ENCODE measurements at regions of chr10 and their contacts with region 1.

Region 1: GRCh38 chr10:69914398-69915214 is 112.9 kb downstream of the COL13A1 start:
- DNase-seq: no peak
- H3K4me3 ChIP-seq: no peak overlapping the region
- H3K27me3 ChIP-seq: no peaks in the 10 kb centered on the region
- CTCF ChIP-seq: peak; percentile 94

Region 2: DNA sequence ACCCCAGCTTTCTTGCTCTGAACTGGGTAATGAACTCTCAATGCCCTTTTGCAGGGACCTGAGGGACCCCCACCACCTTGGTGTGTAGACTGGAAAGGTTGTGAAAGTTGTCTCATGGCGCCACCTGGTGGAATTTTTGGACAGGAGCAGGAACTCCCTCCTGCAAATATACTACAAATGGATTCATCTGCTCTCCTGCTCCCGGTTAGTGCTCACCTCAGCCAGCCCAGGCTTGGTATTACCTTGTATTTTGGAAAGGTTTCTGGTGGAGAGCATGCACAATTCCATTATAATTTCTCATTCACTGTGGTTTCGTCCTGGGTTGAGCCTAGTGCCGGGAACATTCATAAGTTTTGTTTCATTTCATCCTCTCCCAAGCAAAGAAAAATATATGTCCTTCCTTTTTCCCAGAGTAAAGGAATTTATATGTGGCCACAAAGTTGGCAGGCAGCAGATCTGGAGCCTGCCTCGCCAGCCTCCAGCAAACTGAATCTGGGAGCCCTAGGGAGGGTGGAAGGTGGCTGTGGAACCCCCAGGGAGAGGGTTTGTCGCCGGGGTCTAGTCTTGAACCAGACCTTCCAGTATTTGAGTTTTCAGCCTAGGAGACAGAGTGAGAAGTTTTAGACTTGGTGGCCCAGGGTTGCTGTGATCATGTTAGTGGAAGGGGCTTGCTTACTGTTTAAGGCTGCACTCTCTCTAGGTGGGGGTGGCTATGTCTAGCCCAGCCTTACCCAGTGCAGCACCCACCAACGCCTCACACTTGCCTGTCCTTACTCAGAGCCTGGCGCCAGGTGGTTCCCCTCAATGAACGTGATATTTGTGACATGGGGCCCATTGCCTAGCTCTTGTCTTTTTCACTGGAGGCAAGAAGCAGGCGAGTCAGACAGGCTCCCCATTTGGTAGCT is 275.1 kb before region 1 on chr10:
- CTCF ChIA-PET with region 1: interaction called, 26 read pairs
- POLR2A ChIA-PET with region 1: no interaction called
- DNase-seq: no peak
- H3K4me3 ChIP-seq: no peak overlapping the region
- H3K27me3 ChIP-seq: peaks cover 2% of the 10 kb centered on the region
- CTCF ChIP-seq: peak; percentile 83

Region 3: GRCh38 chr10:69742928-69743602 is 171.5 kb before region 1 on chr10:
- CTCF ChIA-PET with region 1: interaction called, 32 read pairs
- POLR2A ChIA-PET with region 1: no interaction called
- DNase-seq: no peak
- H3K4me3 ChIP-seq: no peak overlapping the region
- H3K27me3 ChIP-seq: peaks cover 7% of the 10 kb centered on the region; the same call in 1 of the 2 replicates
- CTCF ChIP-seq: peak; percentile 66

Region 4: DNA sequence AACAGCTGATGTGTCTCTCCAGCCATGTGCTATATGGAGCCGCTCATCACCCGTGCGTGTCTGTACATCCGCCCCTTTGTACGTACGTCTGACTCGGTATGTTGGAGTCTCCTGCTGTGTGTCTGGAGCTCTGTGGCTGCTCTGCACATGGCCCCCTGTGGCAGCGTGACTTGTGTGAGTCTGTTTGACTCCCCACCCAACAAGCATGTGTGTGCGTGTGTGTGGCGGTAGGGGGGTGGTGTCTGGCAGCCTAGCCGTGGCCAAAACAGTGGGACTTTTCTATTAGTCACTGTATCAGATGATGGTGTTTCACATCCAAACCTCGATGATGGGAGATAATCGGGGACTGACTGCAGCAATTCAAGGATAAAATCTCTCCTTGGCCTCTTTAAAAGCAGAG is 18.8 kb before region 1 on chr10:
- CTCF ChIA-PET with region 1: interaction called, 75 read pairs
- POLR2A ChIA-PET with region 1: no interaction called
- DNase-seq: peak; percentile 71
- H3K4me3 ChIP-seq: no peak overlapping the region
- H3K27me3 ChIP-seq: no peaks in the 10 kb centered on the region
- CTCF ChIP-seq: no peak

Region 5: GRCh38 chr10:69929575-69929974 is 15.0 kb after region 1 on chr10:
- CTCF ChIA-PET with region 1: interaction called, 21 read pairs
- POLR2A ChIA-PET with region 1: no interaction called
- DNase-seq: no peak
- H3K4me3 ChIP-seq: no peak overlapping the region
- H3K27me3 ChIP-seq: no peaks in the 10 kb centered on the region
- CTCF ChIP-seq: no peak

Region 6: GRCh38 chr10:69957886-69958555 is 43.4 kb after region 1 on chr10:
- CTCF ChIA-PET with region 1: interaction called, 17 read pairs
- POLR2A ChIA-PET with region 1: no interaction called
- DNase-seq: no peak
- H3K4me3 ChIP-seq: no peak overlapping the region
- H3K27me3 ChIP-seq: no peaks in the 10 kb centered on the region; the same call in 1 of the 2 replicates
- CTCF ChIP-seq: peak; percentile 91

Region 7: DNA sequence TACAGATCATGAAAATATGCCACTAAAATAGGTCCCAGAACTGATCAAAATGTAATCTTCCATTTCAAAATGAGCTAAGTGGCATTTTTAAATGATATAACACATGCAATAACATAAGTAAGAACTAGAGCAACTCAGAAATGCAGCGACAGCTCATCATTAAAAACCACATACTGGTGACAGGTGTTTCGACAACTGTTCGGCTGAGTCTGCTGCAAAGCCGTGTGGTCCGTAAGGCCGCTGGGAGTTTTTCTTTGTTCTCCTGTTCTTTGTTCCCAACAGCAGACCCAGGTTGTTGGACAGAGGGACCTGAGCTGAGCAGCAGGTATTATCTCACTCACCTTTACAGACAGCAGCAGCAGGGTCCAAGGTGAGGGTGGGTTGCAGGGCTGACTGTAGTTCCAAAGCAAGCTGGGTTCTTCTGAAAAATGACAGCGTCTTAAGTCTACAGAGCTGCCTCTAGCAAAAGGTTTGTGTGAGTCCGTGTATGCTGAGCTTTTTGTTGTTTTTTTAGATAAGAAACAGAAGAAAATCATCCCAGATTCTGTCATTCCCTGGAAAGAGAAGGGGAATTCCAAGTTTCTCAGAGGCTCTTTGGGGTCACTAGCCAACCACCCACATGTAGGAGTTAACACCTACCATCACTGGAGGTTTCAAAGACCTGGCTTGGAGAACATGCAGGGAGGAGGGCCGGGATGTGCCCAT is 92.7 kb after region 1 on chr10:
- CTCF ChIA-PET with region 1: no interaction called
- POLR2A ChIA-PET with region 1: no interaction called
- DNase-seq: no peak
- H3K4me3 ChIP-seq: no peak overlapping the region
- H3K27me3 ChIP-seq: peaks cover 3% of the 10 kb centered on the region
- CTCF ChIP-seq: no peak

Region 8: GRCh38 chr10:70052462-70053217 is 138.0 kb after region 1 on chr10 and contains the start of gene MACROH2A2:
- CTCF ChIA-PET with region 1: no interaction called
- POLR2A ChIA-PET with region 1: no interaction called
- DNase-seq: peak; percentile 21
- H3K4me3 ChIP-seq: peak within 1 kb of the TSS; percentile 54
- H3K27me3 ChIP-seq: peaks cover 21% of the 10 kb centered on the region
- CTCF ChIP-seq: peak; percentile 47
- polyA plus RNA-seq, gene MACROH2A2: 2.7 TPM in 2 replicates

Region 9: DNA sequence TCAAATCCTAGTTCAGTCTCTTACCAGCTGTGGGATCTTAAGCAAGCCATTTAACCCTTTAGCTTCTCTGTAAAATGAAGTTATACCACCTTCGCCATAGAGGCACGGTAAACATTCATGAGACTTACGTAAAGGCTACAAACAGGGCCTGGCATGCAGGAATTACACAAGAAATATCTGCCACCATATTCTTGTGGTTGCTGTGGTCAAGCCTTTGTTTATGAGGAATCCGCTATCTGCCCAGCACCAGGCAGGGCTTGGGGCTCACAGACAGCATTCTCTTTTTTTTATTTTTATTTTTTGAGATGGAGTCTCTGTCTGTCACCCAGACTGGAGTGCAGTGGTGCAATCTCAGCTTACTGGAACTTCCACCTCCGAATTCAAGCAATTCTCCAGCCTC is 208.1 kb after region 1 on chr10:
- CTCF ChIA-PET with region 1: no interaction called
- POLR2A ChIA-PET with region 1: no interaction called
- DNase-seq: no peak
- H3K4me3 ChIP-seq: no peak overlapping the region
- H3K27me3 ChIP-seq: no peaks in the 10 kb centered on the region
- CTCF ChIP-seq: no peak

Measured in BJ (cell line).